SK-N-SH (cell line): ENCODE measurements at regions of chr7 and their contacts with region 1.

Region 1: DNA sequence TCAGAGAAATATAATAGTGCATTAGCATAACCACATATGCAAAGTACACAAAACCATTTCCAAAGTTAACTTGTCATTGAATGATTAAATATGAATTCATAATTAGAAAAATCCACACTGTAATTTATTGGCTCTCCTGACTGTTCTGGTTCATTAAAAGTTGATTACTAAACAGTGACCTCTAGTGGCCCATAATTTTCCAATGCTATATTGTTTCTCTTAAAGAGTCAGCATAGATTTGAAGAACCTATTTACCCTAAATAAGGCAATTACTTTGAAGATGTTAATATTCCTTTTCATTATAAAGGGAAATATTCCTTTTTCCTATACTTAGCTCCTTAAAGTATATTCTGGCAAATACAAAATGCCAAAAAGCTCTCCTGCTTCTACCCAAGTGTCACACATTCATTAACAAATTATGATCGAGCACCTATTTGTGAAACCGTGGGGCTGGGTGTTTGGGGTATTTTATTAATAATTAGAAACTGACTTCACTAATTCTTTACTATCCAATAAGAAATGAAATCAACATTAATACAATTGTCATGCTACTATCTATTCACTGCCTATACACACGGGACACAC is 86.2 kb downstream of the HIBADH start:
- DNase-seq: peak; percentile 41
- H3K4me3 ChIP-seq: no peak overlapping the region
- H3K27ac ChIP-seq: no peak overlapping the region
- H3K4me1 ChIP-seq: 0 out of 4 replicates have a peak, but pooled peaks cover 0 to 4% of the 10 kb centered on the region in 2 experiments
- H3K27me3 ChIP-seq: no peaks in the 10 kb centered on the region
- CTCF ChIP-seq: peak; percentile 94
- EP300 ChIP-seq: no peak
- RAD21 ChIP-seq: peak; percentile 83

Region 2: GRCh38 chr7:27553273-27553672 is 23.2 kb before region 1 on chr7:
- CTCF ChIA-PET with region 1: interaction called, 10 read pairs
- POLR2A ChIA-PET with region 1: no interaction called
- DNase-seq: no peak
- H3K4me3 ChIP-seq: no peak overlapping the region
- H3K27ac ChIP-seq: no peak overlapping the region
- H3K4me1 ChIP-seq: no peaks in the 10 kb centered on the region
- H3K27me3 ChIP-seq: no peaks in the 10 kb centered on the region
- CTCF ChIP-seq: no peak
- EP300 ChIP-seq: no peak
- RAD21 ChIP-seq: no peak

Region 3: DNA sequence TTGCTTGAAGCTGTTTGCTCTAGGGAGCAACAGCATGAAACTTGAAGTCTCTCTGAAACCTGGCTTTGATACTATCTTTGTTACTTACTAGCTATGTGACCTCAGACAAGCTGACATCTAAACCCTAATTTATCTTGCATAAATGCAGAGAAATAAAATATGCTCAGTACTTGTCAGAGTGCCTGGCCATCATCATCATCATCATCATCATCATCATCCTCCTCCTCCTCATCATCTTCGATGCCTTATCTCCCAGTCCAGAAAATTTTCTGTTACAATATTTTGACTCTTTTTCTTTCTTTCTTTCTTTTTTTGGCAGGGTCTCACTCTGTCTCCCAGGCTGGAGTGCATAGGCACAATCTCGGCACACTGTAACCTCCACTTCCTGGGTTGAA is 128.7 kb after region 1 on chr7:
- CTCF ChIA-PET with region 1: no interaction called
- POLR2A ChIA-PET with region 1: no interaction called
- DNase-seq: no peak
- H3K4me3 ChIP-seq: no peak overlapping the region
- H3K27ac ChIP-seq: no peak overlapping the region
- H3K4me1 ChIP-seq: peaks cover 4 to 7% of the 10 kb centered on the region in 2 experiments; a peak in 3 of 4 replicates
- H3K27me3 ChIP-seq: no peaks in the 10 kb centered on the region
- CTCF ChIP-seq: no peak
- EP300 ChIP-seq: no peak
- RAD21 ChIP-seq: no peak

Region 4: DNA sequence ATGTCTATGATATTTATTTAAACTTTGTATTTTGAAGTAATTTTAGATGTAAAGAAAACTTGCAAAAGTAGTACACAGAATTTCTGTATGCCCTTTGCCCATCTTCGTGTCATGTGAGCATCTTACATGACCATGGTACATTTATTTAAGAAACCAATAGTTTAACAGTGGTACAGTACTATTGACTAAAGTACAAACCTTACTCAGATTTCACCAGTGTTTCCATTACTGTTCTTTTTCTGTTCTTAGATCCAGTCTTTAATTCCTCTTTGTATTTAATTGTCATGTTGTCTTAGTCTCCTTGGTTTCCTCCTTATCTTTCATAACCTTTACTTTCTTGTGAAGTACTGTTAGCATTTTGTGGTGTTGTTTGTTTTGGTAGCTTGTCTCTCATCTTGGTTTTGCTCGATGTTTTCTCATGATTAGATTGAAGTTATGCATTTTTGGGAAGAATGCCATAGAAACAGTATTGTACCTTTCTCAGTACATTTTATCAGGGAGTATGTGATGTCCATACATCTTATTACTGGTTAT is 187.6 kb after region 1 on chr7:
- CTCF ChIA-PET with region 1: no interaction called
- POLR2A ChIA-PET with region 1: no interaction called
- DNase-seq: no peak
- H3K4me3 ChIP-seq: no peak overlapping the region
- H3K27ac ChIP-seq: peak overlapping the region in 1 of 2 experiments; percentile 1; a peak in 1 of 4 replicates
- H3K4me1 ChIP-seq: no peaks in the 10 kb centered on the region; a peak in 2 of 4 replicates
- H3K27me3 ChIP-seq: no peaks in the 10 kb centered on the region
- CTCF ChIP-seq: no peak
- EP300 ChIP-seq: no peak
- RAD21 ChIP-seq: no peak